Mammary epithelial cell (primary cell): ENCODE measurements at regions of chr13 and their contacts with region 1.

Region 1: GRCh38 chr13:39406688-39407087 is 196.3 kb downstream of the LHFPL6 start:
- DNase-seq: peak; percentile 92
- H3K4me3 ChIP-seq: no peak overlapping the region
- H3K27ac ChIP-seq: peak overlapping the region; percentile 37
- H3K4me1 ChIP-seq: peaks cover 5% of the 10 kb centered on the region
- H3K27me3 ChIP-seq: no peaks in the 10 kb centered on the region
- CTCF ChIP-seq: peak; percentile 35 to 53

Region 2: GRCh38 chr13:39322836-39323585 is 83.7 kb before region 1 on chr13:
- CTCF ChIA-PET with region 1: interaction called, 10 read pairs
- dilution Hi-C with region 1: no loop called
- in situ Hi-C with region 1: no loop called
- intact Hi-C with region 1: no loop called
- DNase-seq: no peak
- H3K4me3 ChIP-seq: no peak overlapping the region
- H3K27ac ChIP-seq: no peak overlapping the region
- H3K4me1 ChIP-seq: no peaks in the 10 kb centered on the region
- H3K27me3 ChIP-seq: peaks cover 4% of the 10 kb centered on the region
- CTCF ChIP-seq: no peak